ENCODE measurements at regions of chr1 and their contacts with region 1.

Region 1: DNA sequence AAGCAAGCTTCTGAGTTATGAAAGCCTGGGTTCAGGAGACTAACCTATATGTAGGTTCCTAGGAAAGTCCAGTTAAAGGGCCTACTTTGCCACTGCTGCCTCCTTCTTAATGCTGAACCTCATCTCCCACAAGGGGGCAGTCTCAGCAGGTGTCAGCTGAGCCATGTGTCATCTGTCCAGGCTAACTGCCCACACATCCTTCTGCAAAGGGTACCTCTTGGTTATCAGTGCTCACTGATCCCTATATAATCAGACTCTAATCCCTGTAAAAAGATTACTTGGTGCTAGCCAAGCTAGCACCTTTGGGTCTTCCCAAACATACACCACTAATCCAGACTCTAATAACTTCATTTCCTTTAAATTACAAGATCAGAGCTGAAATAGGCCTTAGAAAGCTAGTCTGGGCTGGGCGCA is 9.0 kb downstream of the PRDX1 start:
- DNase-seq: peak; percentile 66
- H3K4me3 ChIP-seq: no peak overlapping the region
- H3K27ac ChIP-seq: no peak overlapping the region
- H3K4me1 ChIP-seq: no peaks in the 10 kb centered on the region
- H3K27me3 ChIP-seq: no peaks in the 10 kb centered on the region
- CTCF ChIP-seq: peak; percentile 79
- EP300 ChIP-seq: no peak
- RAD21 ChIP-seq: peak; percentile 75

Region 2: GRCh38 chr1:45499415-45499769 is 13.3 kb before region 1 on chr1:
- CTCF ChIA-PET with region 1: interaction called, 34 read pairs
- POLR2A ChIA-PET with region 1: no interaction called
- DNase-seq: peak; percentile 61
- H3K4me3 ChIP-seq: peak overlapping the region; percentile 71 to 75
- H3K27ac ChIP-seq: 0 out of 4 replicates have a peak overlapping the region, but pooled peaks of 1 of the 2 experiments have one; percentile 31
- H3K4me1 ChIP-seq: peaks cover 0 to 15% of the 10 kb centered on the region in 2 experiments; a peak in 1 of 4 replicates
- H3K27me3 ChIP-seq: no peaks in the 10 kb centered on the region
- CTCF ChIP-seq: no peak
- EP300 ChIP-seq: no peak
- RAD21 ChIP-seq: no peak

Region 3: DNA sequence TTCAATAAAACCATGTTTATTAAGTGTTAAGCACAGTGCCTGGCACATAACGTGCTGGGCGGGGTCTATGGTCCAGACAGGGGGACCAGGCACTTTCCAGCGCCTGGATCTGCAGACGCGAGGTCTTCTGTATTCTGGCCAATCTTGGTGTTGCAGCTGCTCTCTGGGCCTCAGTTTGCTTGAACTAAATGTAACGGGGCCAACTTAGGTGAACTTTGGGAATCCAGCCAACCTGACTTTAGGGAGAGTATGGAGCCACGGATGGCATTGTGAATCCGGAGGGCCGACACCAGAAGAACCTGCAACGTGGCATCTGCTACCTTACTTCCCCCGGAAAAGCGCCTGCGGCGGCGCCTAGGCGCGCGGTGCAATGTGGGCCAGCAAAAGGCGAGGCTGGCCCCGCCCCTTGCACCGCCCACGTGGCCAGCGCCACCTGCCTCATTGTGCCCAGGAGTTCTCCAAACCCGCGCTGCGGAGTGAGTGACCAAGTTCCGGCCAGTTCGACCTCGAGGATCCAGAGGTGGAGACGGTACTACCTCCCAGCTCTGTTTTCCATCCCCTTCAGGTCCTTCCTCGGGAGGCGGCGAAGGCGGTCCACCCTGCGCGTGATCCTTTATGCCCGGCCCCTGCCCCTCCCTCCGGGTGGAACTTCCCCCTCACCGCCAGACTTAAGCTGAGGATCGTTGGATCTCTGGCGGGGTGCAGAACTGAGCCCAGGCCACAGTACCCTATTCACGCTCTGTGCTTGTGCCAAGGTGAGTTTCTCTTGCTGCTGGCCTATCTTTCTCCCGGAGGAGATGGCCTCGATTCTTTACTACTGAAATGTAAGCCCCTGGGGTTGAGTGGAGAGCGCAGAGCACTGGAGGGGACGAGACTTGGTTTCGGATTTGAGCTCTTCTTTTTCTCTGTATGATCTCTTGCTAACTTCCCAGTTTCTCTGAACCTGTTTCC is 38.0 kb after region 1 on chr1 and contains the start of gene AKR1A1:
- CTCF ChIA-PET with region 1: interaction called, 17 read pairs
- POLR2A ChIA-PET with region 1: interaction called, 4 read pairs
- DNase-seq: peak; percentile 90
- H3K4me3 ChIP-seq: peak within 1 kb of the TSS; percentile 69 to 72
- H3K27ac ChIP-seq: peak within 1 kb of the TSS; percentile 80 to 90
- H3K4me1 ChIP-seq: peaks cover 6 to 10% of the 10 kb centered on the region in 2 experiments; a peak in 2 of 4 replicates
- H3K27me3 ChIP-seq: no peaks in the 10 kb centered on the region
- CTCF ChIP-seq: no peak
- EP300 ChIP-seq: no peak
- RAD21 ChIP-seq: no peak
- polyA plus RNA-seq, gene AKR1A1: 156 and 185 TPM in 2 replicates

Region 4: GRCh38 chr1:45557422-45557944 is 44.8 kb after region 1 on chr1:
- CTCF ChIA-PET with region 1: interaction called, 24 read pairs
- POLR2A ChIA-PET with region 1: interaction called, 3 read pairs
- DNase-seq: no peak
- H3K4me3 ChIP-seq: no peak overlapping the region
- H3K27ac ChIP-seq: peak overlapping the region in 1 of 2 experiments; percentile 50; a peak in 2 of 4 replicates
- H3K4me1 ChIP-seq: peaks cover under 1 to 6% of the 10 kb centered on the region in 2 experiments; a peak in 2 of 4 replicates
- H3K27me3 ChIP-seq: no peaks in the 10 kb centered on the region
- CTCF ChIP-seq: no peak
- EP300 ChIP-seq: no peak
- RAD21 ChIP-seq: no peak

Region 5: GRCh38 chr1:45583264-45583665 is 70.6 kb after region 1 on chr1:
- CTCF ChIA-PET with region 1: interaction called, 12 read pairs
- POLR2A ChIA-PET with region 1: interaction called, 3 read pairs
- DNase-seq: peak; percentile 95
- H3K4me3 ChIP-seq: peak overlapping the region; percentile 76 to 97
- H3K27ac ChIP-seq: peak overlapping the region; percentile 62 to 90
- H3K4me1 ChIP-seq: peaks cover 5 to 9% of the 10 kb centered on the region in 2 experiments; a peak in 3 of 4 replicates
- H3K27me3 ChIP-seq: no peaks in the 10 kb centered on the region
- CTCF ChIP-seq: no peak
- EP300 ChIP-seq: no peak
- RAD21 ChIP-seq: no peak

Region 6: DNA sequence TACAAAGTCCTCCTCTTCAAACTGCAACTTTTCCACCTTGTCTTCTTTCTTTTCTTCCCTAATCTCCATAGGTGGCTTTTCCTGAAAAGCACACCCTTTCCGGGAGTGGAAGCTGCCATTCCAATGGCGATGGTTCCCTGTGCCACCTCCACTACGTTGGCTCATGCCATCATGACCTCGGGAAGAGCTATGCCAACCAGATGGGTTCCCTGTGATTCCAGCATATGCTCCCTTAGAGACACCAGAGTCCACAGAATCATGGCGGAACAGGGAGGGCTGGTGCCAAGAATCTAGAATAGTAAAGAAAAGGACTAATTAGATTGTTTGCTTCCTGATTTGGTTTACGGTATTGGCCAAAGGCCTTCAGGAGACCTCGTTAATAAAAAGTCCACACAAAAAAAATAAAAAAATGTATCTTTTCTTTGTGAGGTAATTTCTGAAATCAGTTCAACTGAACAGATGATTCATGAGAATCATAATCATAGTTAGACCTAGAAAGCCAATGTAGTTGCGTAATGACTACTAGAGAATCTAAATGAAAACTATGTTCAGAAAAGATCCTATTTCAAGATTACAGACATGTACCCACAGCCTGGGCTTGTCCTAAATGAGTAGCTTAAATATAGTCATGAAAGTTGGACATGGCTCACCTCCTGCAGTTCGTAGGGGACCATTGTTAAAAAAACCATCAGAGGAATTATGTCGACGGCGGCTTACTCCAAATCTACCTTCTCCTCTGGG is 142.1 kb after region 1 on chr1:
- CTCF ChIA-PET with region 1: no interaction called
- POLR2A ChIA-PET with region 1: no interaction called
- DNase-seq: no peak
- H3K4me3 ChIP-seq: no peak overlapping the region
- H3K27ac ChIP-seq: no peak overlapping the region
- H3K4me1 ChIP-seq: no peaks in the 10 kb centered on the region
- H3K27me3 ChIP-seq: no peaks in the 10 kb centered on the region
- CTCF ChIP-seq: no peak
- EP300 ChIP-seq: no peak
- RAD21 ChIP-seq: no peak

Region 7: GRCh38 chr1:45879885-45880598 is 367.4 kb after region 1 on chr1:
- CTCF ChIA-PET with region 1: interaction called, 10 read pairs
- POLR2A ChIA-PET with region 1: no interaction called
- DNase-seq: no peak
- H3K4me3 ChIP-seq: no peak overlapping the region
- H3K27ac ChIP-seq: no peak overlapping the region
- H3K4me1 ChIP-seq: peaks cover 0 to 16% of the 10 kb centered on the region in 2 experiments; a peak in 2 of 4 replicates
- H3K27me3 ChIP-seq: no peaks in the 10 kb centered on the region
- CTCF ChIP-seq: no peak
- EP300 ChIP-seq: no peak
- RAD21 ChIP-seq: no peak